ENCODE measurements at regions of chr10 and their contacts with region 1.

Region 1: GRCh38 chr10:73096449-73097304 is at the start of gene P4HA1:
- DNase-seq: peak; percentile 95
- H3K4me3 Mint-ChIP-seq: peak within 1 kb of the TSS; percentile 85
- H3K27ac Mint-ChIP-seq: peak within 1 kb of the TSS; percentile 92
- H3K4me1 Mint-ChIP-seq: no peaks in the 10 kb centered on the region
- H3K27me3 Mint-ChIP-seq: no peaks in the 10 kb centered on the region
- CTCF ChIP-seq: peak; percentile 49
- total RNA-seq, gene P4HA1: 23.9 and 25.2 TPM in 2 replicates

Region 2: DNA sequence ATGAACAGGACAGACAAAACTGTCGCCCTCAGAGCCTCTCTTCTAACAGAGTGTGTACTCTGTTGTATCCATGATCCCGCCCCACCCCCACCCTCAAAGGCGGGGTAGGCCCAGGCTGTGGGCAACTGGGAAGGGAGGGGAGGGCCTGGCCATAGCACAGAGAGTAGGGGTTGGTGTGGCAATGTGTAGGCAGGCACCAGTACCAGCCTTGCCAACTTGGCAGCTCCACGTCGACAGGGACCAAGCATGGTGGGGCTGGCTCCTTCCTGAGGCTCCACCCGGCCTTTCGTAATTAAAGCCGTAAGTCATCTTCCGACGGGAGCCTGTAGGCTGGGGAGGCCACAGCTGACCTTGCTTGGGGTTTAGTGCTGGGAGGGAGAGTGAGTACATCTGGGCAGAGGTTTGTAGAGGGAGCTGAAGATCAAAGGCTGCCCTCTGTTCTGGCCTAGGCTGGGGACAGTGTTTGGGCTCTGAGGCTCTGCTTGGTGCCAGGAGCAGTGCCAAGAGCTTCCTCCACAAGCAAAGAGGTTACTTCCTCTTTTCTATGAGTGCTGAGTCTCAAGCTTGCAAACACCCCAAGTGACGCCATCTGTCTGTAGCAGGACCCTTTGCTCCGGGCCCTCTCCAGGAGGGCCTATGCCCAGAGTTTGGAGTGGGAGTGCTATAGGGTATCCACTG is 1498.7 kb before region 1 on chr10:
- CTCF ChIA-PET with region 1: no interaction called
- POLR2A ChIA-PET with region 1: no interaction called
- intact Hi-C with region 1: no loop called
- DNase-seq: peak; percentile 65
- H3K4me3 Mint-ChIP-seq: no peak overlapping the region
- H3K27ac Mint-ChIP-seq: no peak overlapping the region
- H3K4me1 Mint-ChIP-seq: peaks cover 9% of the 10 kb centered on the region
- H3K27me3 Mint-ChIP-seq: peaks cover 3% of the 10 kb centered on the region
- CTCF ChIP-seq: no peak

Region 3: GRCh38 chr10:72997099-72997498 is 99.6 kb before region 1 on chr10:
- CTCF ChIA-PET with region 1: no interaction called
- POLR2A ChIA-PET with region 1: no interaction called
- intact Hi-C with region 1: no loop called
- DNase-seq: no peak
- H3K4me3 Mint-ChIP-seq: no peak overlapping the region
- H3K27ac Mint-ChIP-seq: no peak overlapping the region
- H3K4me1 Mint-ChIP-seq: no peaks in the 10 kb centered on the region
- H3K27me3 Mint-ChIP-seq: no peaks in the 10 kb centered on the region
- CTCF ChIP-seq: no peak

Region 4: GRCh38 chr10:73076360-73077183 is 20.1 kb before region 1 on chr10:
- CTCF ChIA-PET with region 1: interaction called, 6 read pairs
- POLR2A ChIA-PET with region 1: interaction called, 52 read pairs
- intact Hi-C with region 1: no loop called
- DNase-seq: peak; percentile 71
- H3K4me3 Mint-ChIP-seq: peak overlapping the region; percentile 59
- H3K27ac Mint-ChIP-seq: peak overlapping the region; percentile 61
- H3K4me1 Mint-ChIP-seq: peaks cover 10% of the 10 kb centered on the region
- H3K27me3 Mint-ChIP-seq: no peaks in the 10 kb centered on the region
- CTCF ChIP-seq: no peak

Region 5: GRCh38 chr10:73110345-73110849 is 13.7 kb after region 1 on chr10 and contains the start of gene NUDT13:
- CTCF ChIA-PET with region 1: interaction called, 32 read pairs
- POLR2A ChIA-PET with region 1: interaction called, 200 read pairs
- intact Hi-C with region 1: loop called (anchors 2 kb)
- DNase-seq: peak; percentile 67
- H3K4me3 Mint-ChIP-seq: peak within 1 kb of the TSS; percentile 78
- H3K27ac Mint-ChIP-seq: peak within 1 kb of the TSS; percentile 93
- H3K4me1 Mint-ChIP-seq: peaks cover 6% of the 10 kb centered on the region
- H3K27me3 Mint-ChIP-seq: no peaks in the 10 kb centered on the region
- CTCF ChIP-seq: no peak
- total RNA-seq, gene NUDT13: 1.7 and 1.8 TPM in 2 replicates

Region 6: GRCh38 chr10:73131301-73131700 is 34.6 kb after region 1 on chr10:
- CTCF ChIA-PET with region 1: interaction called, 6 read pairs
- POLR2A ChIA-PET with region 1: interaction called, 23 read pairs
- intact Hi-C with region 1: loop called (anchors 5 kb)
- DNase-seq: peak; percentile 40
- H3K4me3 Mint-ChIP-seq: no peak overlapping the region
- H3K27ac Mint-ChIP-seq: no peak overlapping the region
- H3K4me1 Mint-ChIP-seq: peaks cover 6% of the 10 kb centered on the region
- H3K27me3 Mint-ChIP-seq: no peaks in the 10 kb centered on the region
- CTCF ChIP-seq: no peak

Region 7: GRCh38 chr10:73159038-73159648 is 62.5 kb after region 1 on chr10:
- CTCF ChIA-PET with region 1: interaction called, 66 read pairs
- POLR2A ChIA-PET with region 1: interaction called, 19 read pairs
- intact Hi-C with region 1: no loop called
- DNase-seq: peak; percentile 69
- H3K4me3 Mint-ChIP-seq: no peak overlapping the region
- H3K27ac Mint-ChIP-seq: no peak overlapping the region
- H3K4me1 Mint-ChIP-seq: peaks cover 24% of the 10 kb centered on the region
- H3K27me3 Mint-ChIP-seq: no peaks in the 10 kb centered on the region
- CTCF ChIP-seq: peak; percentile 71

Region 8: DNA sequence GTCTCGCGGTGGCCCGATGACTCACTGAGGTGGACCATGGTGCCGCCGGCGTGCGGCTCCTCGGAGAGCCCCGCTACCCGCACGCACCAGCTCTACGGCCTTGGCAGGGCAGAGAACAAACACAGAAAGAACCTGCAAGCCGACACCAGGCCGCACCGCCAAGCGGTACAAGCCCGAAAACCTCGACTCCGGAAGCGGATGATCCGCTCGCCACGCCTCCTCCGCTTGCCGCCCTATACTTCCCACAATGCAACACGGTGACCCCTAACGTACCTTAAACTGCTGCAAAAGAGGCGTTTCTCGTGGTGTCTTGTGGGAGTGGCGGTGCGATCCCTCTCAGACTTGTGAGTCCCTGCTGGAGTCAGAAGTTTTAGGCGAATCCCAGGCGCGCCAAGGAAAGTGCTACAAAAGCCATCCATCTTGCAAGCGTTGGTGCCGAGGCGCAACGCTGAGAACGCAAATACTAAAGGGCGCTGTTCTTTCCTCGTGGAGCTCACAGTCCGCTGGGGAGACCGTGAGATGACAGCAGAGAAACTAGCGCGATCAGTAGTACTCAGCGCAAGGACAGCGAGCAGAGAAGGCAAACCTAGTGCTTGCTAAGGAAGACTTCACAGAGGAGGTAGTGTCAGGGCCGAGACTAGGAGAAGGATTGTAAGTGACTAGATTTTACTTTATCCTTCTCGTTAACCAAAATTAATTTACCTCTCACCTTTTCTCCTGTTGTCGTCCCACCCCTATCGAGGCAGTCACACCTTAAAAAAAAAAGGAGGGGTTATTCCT is 156.0 kb after region 1 on chr10 and contains the start of gene MRPS16:
- CTCF ChIA-PET with region 1: no interaction called
- POLR2A ChIA-PET with region 1: interaction called, 13 read pairs
- intact Hi-C with region 1: no loop called
- DNase-seq: peak; percentile 98
- H3K4me3 Mint-ChIP-seq: peak within 1 kb of the TSS; percentile 90
- H3K27ac Mint-ChIP-seq: peak within 1 kb of the TSS; percentile 94
- H3K4me1 Mint-ChIP-seq: peaks cover 9% of the 10 kb centered on the region
- H3K27me3 Mint-ChIP-seq: no peaks in the 10 kb centered on the region
- CTCF ChIP-seq: no peak
- total RNA-seq, gene MRPS16: 203 and 247 TPM in 2 replicates